ENCODE measurements at regions of chr22 and their contacts with region 1.

Region 1: DNA sequence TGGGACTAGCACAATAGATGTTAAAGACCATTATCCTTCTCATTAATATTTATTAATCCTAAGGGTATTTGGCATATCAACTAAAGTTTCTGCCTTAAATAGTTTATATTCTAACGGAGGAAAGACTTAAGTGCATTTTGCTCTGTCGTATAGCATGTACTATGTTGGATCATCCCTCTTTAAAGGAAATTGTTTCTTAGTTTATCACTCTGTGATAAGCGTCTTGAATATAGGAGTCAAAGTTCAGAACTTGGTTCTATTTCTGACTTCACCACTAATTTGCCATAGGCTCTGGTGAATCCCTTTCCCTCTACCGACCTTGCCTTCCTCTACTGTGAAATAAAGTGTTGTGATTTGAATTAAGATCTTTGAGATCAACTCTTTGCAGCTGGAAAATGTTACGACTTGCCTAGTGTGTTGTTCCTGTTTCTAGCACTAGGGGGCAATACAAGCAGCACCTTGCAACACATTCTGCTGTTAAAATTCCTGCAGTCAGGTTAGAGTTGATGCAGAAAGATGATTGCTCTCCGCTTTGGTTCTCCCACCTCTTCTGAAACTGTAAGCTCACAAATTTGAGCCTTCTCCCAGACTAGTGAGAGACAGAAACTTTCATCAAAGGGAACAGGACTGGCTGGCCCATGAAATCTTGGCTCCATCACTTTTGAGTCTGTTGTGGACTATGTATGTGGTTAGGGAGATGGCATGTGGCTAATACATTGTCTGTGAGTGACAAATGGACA is 27.8 kb upstream of the ZNRF3 start:
- DNase-seq: peak in 38 of 42 donors; percentile 5 to 85 (median 51)

Region 2: GRCh38 chr22:28703436-28703835 is 152.1 kb before region 1 on chr22:
- intact Hi-C with region 1: no loop called
- DNase-seq: no peak

Region 3: DNA sequence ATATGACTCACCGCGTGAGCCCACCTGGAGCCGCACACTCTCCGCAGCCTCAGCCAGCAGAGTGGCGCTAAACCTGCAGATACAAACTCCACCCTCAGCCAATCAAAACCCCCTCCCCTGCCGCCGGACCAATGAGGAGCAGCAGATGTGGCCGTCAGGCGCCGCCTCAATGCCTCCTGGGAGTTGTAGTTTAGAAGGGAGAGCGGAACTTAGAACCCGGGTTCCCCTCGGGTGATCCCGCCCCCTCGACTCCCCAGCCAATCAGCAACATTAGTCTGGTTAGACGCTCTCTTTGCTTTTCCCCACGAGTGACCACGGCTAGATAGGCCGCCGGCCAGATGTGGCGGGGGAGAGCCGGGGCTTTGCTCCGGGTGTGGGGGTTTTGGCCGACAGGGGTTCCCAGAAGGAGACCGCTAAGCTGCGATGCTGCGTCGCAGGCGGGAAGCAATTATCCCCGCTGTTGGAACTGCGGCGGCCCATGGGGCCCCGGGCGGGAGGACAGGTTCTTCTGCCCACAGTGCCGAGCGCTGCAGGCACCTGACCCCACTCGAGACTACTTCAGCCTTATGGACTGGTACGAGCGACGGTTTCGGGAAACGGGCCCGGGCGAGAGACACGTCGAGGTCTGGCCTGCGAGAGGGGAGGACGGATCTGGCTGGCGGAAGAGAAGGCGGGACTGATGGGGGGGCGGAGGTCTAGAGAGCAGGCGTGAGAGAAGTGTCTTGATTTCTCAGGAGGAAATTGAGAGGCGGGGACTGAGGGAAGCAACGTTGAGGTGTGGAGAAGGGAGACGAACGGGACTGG is 113.6 kb before region 1 on chr22 and contains the starts of genes CHEK2 and HSCB:
- intact Hi-C with region 1: no loop called
- DNase-seq: peak; percentile 94 to 99 (median 98)

Region 4: DNA sequence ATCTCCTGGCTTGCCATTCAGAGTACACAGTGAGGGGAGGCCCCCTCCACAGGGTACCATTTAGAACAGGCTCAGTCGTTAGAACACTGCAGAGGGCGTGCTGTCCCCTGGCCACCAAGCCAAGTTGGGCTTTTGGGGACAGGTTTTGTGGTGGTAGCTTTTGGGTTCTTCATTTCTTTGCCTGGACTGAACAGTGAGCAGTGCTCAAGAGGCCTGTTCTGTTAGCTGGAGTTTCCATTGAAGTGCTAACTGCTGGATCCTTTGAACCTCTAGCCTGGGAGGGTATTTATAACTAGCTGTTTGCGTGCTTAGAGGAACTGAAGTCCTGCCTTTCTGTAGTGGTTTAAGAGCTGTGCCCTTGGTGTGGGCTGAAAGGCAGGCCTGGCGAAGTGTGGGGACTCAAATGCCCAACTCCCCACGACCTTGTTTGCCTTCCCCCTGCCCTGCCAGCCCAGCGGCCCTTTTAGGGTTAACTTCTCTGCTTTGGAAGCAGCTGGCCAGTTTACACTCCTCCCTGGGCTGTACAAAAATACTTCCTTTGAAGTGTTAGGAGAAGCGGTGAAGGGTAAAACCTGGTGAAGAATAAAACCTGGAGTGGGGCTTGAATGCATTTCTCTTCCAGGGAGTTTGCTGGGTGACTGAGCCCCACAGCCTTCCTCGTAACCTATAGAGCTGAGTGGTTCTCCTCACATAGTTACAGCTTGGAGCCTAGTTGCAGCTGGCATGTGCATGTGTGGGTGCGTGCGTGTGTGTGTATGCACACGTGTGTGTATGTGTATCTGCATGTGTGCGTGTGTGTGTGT is 62.4 kb after region 1 on chr22:
- intact Hi-C with region 1: loop called (anchors 10 kb)
- DNase-seq: peak in 3 of 42 donors; percentile 11 to 55 (median 28)

Region 5: DNA sequence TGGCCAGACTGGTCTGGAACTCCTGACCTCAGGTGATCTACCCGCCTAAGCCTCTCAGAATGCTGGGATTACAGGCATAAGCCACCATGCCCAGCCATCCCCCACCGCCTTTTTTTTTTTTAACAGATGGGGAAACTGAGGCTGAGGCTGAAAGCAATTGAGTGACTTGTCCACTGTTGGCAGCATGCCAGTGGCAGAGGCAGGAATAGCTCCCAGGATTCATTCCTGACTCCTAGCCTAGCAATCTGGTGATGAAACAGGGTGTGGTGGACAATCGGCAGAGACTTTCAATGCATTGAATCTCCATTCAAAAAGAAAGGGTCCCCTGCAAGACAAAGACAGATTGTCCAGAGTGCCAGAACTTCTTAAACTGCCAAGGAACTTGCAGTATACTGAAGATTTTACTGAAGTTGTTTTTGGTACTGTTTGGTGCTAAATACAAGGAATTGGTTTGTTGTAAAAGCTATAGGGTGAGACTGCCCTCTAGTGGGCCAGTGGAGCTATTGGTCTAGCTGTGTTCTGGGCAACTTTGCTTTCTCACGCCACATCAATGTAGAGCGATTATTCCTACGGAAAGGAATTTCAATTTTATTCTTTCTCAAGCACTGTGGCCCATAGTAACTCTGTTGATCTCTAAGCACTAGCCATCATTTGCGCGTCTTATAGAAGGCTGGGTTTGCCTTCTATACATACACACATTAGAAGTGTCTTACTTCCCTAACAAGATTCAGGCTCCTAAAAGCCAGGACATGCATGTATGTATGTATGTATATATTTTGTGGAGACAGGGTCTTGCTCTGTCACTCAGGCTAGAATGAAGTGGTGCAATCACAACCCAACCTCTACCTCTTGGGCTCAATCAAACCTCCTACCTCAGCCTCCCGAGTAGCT is 185.1 kb after region 1 on chr22:
- intact Hi-C with region 1: loop called (anchors 2 kb)
- DNase-seq: peak in 40 of 42 donors; percentile 33 to 91 (median 74)

Region 6: DNA sequence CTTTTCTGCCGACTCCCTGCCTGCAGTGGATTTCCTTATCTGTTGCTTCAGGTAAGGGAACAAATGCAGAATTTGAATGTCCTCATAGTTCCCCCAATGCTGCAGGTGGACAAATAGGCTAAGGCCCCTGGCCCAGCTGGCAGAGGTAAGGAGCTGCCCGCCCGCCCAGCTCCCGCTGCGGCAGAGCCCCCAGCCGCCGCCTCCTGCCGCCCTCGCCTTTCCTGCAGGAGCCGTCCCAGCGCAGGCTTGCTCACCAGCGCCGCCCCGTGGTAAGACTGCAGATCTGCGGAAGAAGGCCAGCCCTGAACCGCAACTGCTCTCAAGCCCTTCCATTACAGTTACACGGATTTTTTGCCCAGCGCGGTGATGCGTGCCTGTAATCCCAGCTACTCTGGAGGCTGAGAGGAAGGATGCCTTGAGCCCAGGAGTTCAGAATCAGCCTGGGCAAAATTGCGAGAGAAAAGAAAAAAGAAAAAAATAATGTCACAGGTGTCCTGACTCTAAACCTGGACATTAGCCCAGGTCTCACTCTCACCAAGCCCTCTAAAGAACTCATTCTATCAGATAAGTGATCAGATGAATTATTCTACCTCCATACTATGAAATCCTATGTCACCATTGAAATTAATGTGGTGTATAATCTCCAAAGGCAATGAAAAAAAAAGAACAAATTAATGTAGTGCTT is 299.0 kb after region 1 on chr22:
- intact Hi-C with region 1: loop called (anchors 10 kb)
- DNase-seq: peak; percentile 67 to 92 (median 84)